Activated CD8-positive, alpha-beta T cell treated with anti-CD3 and anti-CD28 coated beads, Interleukin-2, amount 10 ng/mL, durations not matched to agents 7 days and 5 days (primary cell): ENCODE measurements at regions of chr1 and their contacts with region 1.

Region 1: DNA sequence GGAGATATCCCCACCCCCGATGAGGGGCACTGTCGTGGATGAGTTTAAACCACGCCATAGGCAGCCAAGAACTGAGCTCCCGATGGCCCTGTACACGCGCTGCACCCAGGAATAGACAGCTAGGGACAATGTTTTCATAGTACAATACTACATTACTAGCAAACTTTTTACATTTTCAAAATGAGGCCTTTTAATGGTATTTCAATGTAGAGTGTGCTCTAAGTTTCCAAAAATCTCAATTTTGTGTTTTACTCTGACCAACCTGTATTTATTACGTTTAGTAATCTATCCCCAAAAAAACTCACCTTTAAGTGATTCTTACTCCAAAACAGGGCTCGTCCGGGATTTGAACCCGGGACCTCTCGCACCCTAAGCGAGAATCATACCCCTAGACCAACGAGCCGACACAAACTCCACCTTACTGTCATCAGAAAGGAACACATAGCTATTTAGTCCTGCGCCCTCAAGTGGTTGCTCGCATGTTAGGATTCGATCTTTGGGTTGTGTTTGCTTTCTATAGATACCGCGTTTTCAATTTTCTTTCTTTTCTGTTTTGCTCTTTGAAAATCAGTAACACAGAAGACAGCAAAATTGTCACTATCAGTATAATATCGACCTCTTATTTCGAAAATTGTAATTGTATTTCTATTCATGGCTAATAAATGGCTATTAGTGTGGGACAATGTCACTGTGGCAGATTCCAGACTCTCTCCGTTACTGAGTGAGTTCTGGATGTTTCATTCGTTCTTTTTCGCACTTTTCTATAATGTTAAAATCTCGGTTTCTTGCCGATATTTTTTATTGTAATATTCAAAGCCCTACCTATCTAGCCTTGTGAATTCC is 6.4 kb upstream of the MPZL1 start:
- DNase-seq: peak; percentile 94
- ATAC-seq: peak; percentile 54
- H3K4me3 Mint-ChIP-seq: peak overlapping the region; percentile 91
- H3K27ac Mint-ChIP-seq: peak overlapping the region; percentile 96
- H3K4me1 Mint-ChIP-seq: peaks cover 34% of the 10 kb centered on the region
- H3K27me3 Mint-ChIP-seq: peaks cover 11% of the 10 kb centered on the region

Region 2: GRCh38 chr1:167627865-167628641 is 87.3 kb before region 1 on chr1:
- CTCF ChIA-PET with region 1: interaction called, 15 read pairs
- POLR2A ChIA-PET with region 1: interaction called, 7 read pairs
- DNase-seq: peak; percentile 89
- ATAC-seq: peak; percentile 83
- H3K4me3 Mint-ChIP-seq: peak overlapping the region; percentile 98
- H3K27ac Mint-ChIP-seq: peak overlapping the region; percentile 91
- H3K4me1 Mint-ChIP-seq: peaks cover 66% of the 10 kb centered on the region
- H3K27me3 Mint-ChIP-seq: no peaks in the 10 kb centered on the region

Region 3: DNA sequence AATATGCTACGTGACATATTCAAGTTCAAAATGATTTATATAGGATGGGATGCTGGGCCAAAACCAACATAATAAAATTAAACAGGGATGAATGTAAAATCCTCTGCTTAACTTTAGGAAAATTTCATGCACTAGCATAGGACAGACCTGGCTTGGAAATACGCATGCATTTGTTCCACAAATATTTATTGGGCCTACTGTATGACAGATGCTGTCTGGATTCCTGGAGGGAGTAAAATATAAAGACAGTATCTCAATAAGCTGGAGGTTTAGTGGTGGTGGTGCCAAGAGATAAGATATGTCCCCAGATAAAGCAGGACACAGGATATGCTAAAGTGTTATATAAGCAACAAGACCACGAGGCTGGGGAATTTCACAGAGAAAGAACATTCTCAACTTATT is 70.2 kb before region 1 on chr1:
- CTCF ChIA-PET with region 1: no interaction called
- POLR2A ChIA-PET with region 1: no interaction called
- DNase-seq: no peak
- ATAC-seq: no peak
- H3K4me3 Mint-ChIP-seq: no peak overlapping the region
- H3K27ac Mint-ChIP-seq: peak overlapping the region; percentile 4
- H3K4me1 Mint-ChIP-seq: peaks cover 81% of the 10 kb centered on the region
- H3K27me3 Mint-ChIP-seq: no peaks in the 10 kb centered on the region

Region 4: GRCh38 chr1:167761400-167761799 is 46.0 kb after region 1 on chr1:
- CTCF ChIA-PET with region 1: interaction called, 10 read pairs
- POLR2A ChIA-PET with region 1: no interaction called
- DNase-seq: no peak
- ATAC-seq: no peak
- H3K4me3 Mint-ChIP-seq: no peak overlapping the region
- H3K27ac Mint-ChIP-seq: peak overlapping the region; percentile 64
- H3K4me1 Mint-ChIP-seq: peaks cover 24% of the 10 kb centered on the region
- H3K27me3 Mint-ChIP-seq: no peaks in the 10 kb centered on the region

Region 5: DNA sequence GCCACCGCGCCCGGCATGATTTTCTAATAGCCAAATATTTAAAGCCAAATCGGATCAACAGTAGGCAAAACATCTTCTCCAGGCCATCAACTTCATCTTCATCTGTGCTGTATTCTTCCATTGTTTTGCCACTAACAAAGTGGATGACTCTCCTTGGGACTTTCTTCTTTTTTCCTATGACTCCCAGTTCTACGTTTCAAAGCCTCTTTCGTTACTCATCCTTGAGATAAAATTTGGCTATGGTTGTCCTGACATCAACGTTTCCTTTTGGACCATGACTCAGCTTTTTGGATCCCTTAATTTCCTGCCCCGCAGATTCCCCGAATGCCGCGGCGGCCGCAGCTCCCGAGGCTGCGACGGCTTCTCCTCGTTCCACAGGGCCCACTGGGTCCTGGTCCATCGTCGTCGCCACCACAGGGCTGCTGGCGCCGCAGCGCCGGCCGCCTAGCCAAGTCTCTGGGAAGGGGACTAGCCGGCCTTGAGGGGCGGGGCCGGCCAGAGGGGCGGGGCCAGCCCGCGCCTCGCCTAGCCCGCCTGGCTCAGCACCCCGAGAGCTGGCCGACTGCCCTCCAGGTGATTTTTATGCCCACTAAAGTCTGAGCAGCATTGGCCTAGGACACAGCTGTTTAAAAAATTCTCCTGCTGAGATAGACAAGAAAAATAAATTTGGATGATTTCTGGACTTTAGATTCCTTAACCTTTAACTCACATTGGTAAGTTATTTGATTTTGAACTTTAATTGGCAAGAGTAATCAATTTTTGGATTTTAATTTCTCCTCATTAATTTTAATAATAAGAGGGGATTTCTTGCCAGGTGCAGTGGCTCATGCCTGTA is 104.7 kb after region 1 on chr1:
- CTCF ChIA-PET with region 1: no interaction called
- POLR2A ChIA-PET with region 1: no interaction called
- DNase-seq: no peak
- ATAC-seq: peak; percentile 83
- H3K4me3 Mint-ChIP-seq: peak overlapping the region; percentile 45
- H3K27ac Mint-ChIP-seq: no peak overlapping the region
- H3K4me1 Mint-ChIP-seq: peaks cover 16% of the 10 kb centered on the region
- H3K27me3 Mint-ChIP-seq: peaks cover 16% of the 10 kb centered on the region

Region 6: GRCh38 chr1:167936068-167936929 is 220.9 kb after region 1 on chr1 and contains the start of gene DCAF6:
- CTCF ChIA-PET with region 1: interaction called, 6 read pairs
- POLR2A ChIA-PET with region 1: interaction called, 15 read pairs
- DNase-seq: peak; percentile 98
- ATAC-seq: peak; percentile 82
- H3K4me3 Mint-ChIP-seq: peak within 1 kb of the TSS; percentile 84
- H3K27ac Mint-ChIP-seq: peak within 1 kb of the TSS; percentile 95
- H3K4me1 Mint-ChIP-seq: peaks cover 33% of the 10 kb centered on the region
- H3K27me3 Mint-ChIP-seq: no peaks in the 10 kb centered on the region
- total RNA-seq, gene DCAF6: 22.6 to 25.1 TPM